T-cell (primary cell): ENCODE measurements at regions of chr16 and their contacts with region 1.

Region 1: DNA sequence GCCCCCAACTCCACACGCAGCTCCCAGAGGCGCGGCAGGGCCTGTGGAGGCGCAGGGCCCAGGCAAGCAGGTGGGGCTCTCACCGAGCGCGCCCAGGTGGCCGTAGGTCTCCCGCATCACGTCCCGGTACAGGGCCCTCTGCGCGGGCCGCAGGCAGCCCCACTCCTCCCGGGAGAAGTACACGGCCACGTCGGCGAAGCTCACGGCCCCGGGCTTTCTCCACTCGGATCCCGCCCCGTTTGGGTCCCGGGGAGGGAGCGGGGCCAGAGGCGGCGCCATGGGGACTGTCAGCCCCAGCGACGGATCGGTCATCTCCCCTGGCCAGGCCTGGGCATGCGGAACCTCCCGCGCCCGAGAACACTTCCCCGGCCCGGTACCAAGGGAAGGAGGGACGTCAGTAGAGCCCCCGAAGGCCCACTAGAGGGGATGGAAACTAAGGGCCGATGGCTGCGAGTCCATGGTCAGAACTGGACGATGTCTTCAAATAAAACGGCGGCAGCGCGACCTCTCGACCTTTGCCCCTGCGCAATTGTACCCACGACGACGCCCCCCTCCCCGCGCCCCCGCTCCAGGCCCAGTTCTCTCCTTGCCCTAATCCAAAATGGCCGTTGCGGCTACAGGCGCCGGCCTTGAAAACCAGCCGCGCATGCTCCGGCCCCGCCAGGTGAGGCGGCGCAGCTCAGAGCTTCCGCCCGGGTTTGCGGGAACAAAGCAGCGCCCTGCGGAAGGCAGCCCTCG is at the start of gene ZNF747:
- DNase-seq: peak; percentile 83 to 95 (median 90)
- ATAC-seq: peak; percentile 81 to 84 (median 82)
- H3K4me3 ChIP-seq: peak within 1 kb of the TSS; percentile 83 to 97
- H3K4me3 Mint-ChIP-seq: peak within 1 kb of the TSS; percentile 92 to 100 (median 97)
- H3K27ac ChIP-seq: peak within 1 kb of the TSS; percentile 97
- H3K27ac Mint-ChIP-seq: peak within 1 kb of the TSS; percentile 95 to 99
- H3K4me1 ChIP-seq: peaks cover 7 to 48% of the 10 kb centered on the region in 2 experiments
- H3K4me1 Mint-ChIP-seq: peaks cover 30 to 42% (median 35%) of the 10 kb centered on the region in 3 donors
- H3K27me3 ChIP-seq: no peaks in the 10 kb centered on the region
- H3K27me3 Mint-ChIP-seq: no peaks in the 10 kb centered on the region
- total RNA-seq, gene ZNF747: 6.8 to 17.4 (median 14.2) TPM

Region 2: DNA sequence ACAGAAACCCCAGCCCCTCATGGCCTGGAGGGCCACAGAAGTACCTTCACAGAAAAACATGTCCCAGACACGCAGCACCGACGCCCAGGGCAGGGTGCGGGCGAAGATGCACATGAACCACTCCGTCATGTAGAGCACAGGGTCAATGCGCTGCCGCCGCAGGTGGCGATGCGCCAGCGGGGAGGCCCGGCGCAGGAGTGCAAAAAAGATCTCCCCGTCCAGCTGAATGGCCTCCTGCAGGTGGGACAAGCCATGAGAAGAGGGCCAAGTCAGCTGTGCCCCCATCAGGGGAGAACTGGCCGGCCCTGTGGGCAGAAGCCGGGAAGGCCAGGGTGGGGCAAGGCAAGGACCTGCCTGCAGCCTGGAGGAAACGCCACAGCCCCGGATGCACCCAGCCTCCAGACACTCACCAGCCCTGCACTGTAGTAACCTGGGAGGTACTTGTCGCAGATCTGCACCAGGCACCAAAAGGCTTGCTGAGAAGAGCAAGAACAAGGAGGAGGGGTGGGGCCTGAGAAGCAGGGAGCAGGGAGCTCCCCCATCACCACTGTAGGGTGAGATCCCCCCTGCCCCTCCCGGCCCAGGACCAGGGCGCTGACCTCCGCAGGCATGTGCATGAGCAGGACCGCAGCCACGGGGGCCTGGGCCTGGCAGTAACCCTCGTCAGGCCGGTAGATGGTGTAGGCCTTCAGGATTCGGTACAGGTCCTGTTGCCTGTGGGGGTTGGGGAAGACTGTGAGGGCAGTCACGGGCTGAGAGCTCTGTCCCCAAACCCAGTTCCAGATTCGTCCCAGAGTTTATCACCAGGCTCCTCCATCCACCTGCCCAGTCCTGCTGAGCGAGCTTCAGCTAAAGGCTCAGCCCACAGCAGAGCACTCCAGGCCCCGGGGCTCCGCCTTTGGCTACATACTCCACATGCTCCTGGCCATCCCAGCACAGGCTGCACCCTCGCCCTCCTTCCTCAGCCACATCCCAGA is 175.1 kb before region 1 on chr16:
- CTCF ChIA-PET with region 1: no interaction called
- POLR2A ChIA-PET with region 1: no interaction called
- DNase-seq: no peak
- ATAC-seq: no peak
- H3K4me3 ChIP-seq: no peak overlapping the region
- H3K4me3 Mint-ChIP-seq: no peak overlapping the region
- H3K27ac ChIP-seq: no peak overlapping the region
- H3K27ac Mint-ChIP-seq: peak overlapping the region in 1 of 2 donors; percentile 6
- H3K4me1 ChIP-seq: peaks cover 2 to 20% of the 10 kb centered on the region in 2 experiments
- H3K4me1 Mint-ChIP-seq: peaks cover 17 to 23% (median 19%) of the 10 kb centered on the region in 3 donors
- H3K27me3 ChIP-seq: no peaks in the 10 kb centered on the region
- H3K27me3 Mint-ChIP-seq: no peaks in the 10 kb centered on the region

Region 3: DNA sequence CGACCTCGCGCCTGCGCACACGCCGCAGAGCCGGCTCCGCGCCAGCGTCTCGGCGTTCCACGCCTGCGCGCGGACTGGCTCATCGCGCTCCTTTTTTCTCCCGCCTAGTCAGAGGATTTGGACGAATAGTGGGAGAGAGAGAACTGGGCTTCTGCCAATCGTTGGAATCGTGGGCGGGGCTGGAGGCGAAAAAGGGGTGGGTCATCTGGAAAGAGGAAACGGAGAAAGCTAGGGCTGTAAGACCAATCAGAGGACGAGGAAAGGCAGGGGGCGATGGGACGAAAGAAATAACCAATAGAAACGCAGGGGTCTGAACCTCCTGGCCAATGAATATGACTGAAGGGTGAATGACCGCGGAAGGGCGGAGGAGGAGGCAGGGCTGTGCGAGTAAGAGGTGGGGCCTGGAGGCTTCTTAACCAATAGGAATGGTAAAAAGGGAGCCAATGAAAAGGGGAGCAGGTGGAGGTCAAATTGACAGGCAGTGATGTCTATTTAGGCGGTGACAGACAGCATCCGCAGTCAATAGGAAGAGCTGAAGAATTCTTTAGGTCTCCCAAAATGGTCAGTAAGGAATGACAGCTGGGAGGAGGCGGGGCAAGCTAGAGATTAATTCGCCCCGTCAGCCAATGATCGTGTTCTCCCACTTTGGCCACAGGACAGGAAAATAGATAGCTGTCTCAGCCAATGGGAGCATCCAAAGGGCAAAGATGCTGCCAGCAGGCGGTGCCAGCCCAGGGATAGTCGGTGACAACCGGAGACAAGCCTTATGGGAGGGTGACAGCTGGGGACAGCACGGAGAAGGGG is 163.9 kb before region 1 on chr16 and contains the start of gene TBC1D10B:
- CTCF ChIA-PET with region 1: no interaction called
- POLR2A ChIA-PET with region 1: no interaction called
- DNase-seq: peak; percentile 96 to 100 (median 99)
- ATAC-seq: peak; percentile 83 to 86 (median 84)
- H3K4me3 ChIP-seq: peak within 1 kb of the TSS; percentile 62 to 66
- H3K4me3 Mint-ChIP-seq: peak within 1 kb of the TSS; percentile 85 to 91 (median 86)
- H3K27ac ChIP-seq: peak within 1 kb of the TSS; percentile 73
- H3K27ac Mint-ChIP-seq: peak within 1 kb of the TSS; percentile 93 to 95
- H3K4me1 ChIP-seq: peaks cover 22 to 44% of the 10 kb centered on the region in 2 experiments
- H3K4me1 Mint-ChIP-seq: peaks cover 45 to 49% (median 46%) of the 10 kb centered on the region in 3 donors
- H3K27me3 ChIP-seq: no peaks in the 10 kb centered on the region
- H3K27me3 Mint-ChIP-seq: no peaks in the 10 kb centered on the region
- total RNA-seq, gene TBC1D10B: 24.0 to 60.1 (median 52.5) TPM

Region 4: GRCh38 chr16:30551781-30552180 is 17.2 kb after region 1 on chr16:
- CTCF ChIA-PET with region 1: interaction called, 7 to 46 read pairs
- POLR2A ChIA-PET with region 1: interaction called, 6 to 7 read pairs
- DNase-seq: peak in 34 of 35 experiments; percentile 28 to 85 (median 58)
- ATAC-seq: peak; percentile 85 to 92 (median 88)
- H3K4me3 ChIP-seq: peak overlapping the region in 1 of 2 donors; percentile 15
- H3K4me3 Mint-ChIP-seq: peak overlapping the region; percentile 52 to 76 (median 68)
- H3K27ac ChIP-seq: peak overlapping the region; percentile 80
- H3K27ac Mint-ChIP-seq: peak overlapping the region; percentile 94 to 97
- H3K4me1 ChIP-seq: peaks cover 21 to 62% of the 10 kb centered on the region in 2 experiments
- H3K4me1 Mint-ChIP-seq: peaks cover 59 to 67% (median 63%) of the 10 kb centered on the region in 3 donors
- H3K27me3 ChIP-seq: no peaks in the 10 kb centered on the region
- H3K27me3 Mint-ChIP-seq: no peaks in the 10 kb centered on the region

Region 5: GRCh38 chr16:30557957-30558788 is 23.6 kb after region 1 on chr16 and contains the start of gene ZNF764:
- CTCF ChIA-PET with region 1: interaction called, 7 to 46 read pairs
- POLR2A ChIA-PET with region 1: interaction called in 1 of 2 experiments, 4 read pairs
- DNase-seq: peak; percentile 88 to 97 (median 92)
- ATAC-seq: peak; percentile 90 to 94 (median 92)
- H3K4me3 ChIP-seq: peak within 1 kb of the TSS; percentile 52 to 73
- H3K4me3 Mint-ChIP-seq: peak within 1 kb of the TSS; percentile 84 to 89 (median 88)
- H3K27ac ChIP-seq: peak within 1 kb of the TSS; percentile 87
- H3K27ac Mint-ChIP-seq: peak within 1 kb of the TSS; percentile 93
- H3K4me1 ChIP-seq: peaks cover 5 to 67% of the 10 kb centered on the region in 2 experiments
- H3K4me1 Mint-ChIP-seq: peaks cover 37 to 51% (median 48%) of the 10 kb centered on the region in 3 donors
- H3K27me3 ChIP-seq: peaks cover 0 to 6% of the 10 kb centered on the region in 2 experiments
- H3K27me3 Mint-ChIP-seq: no peaks in the 10 kb centered on the region
- total RNA-seq, gene ZNF764: 14.9 to 33.9 (median 27.3) TPM

Region 6: GRCh38 chr16:30571695-30572600 is 37.4 kb after region 1 on chr16 and contains the start of gene ZNF688:
- CTCF ChIA-PET with region 1: interaction called in 1 of 2 experiments, 12 read pairs
- POLR2A ChIA-PET with region 1: interaction called in 1 of 2 experiments, 11 read pairs
- DNase-seq: peak; percentile 84 to 99 (median 96)
- ATAC-seq: peak; percentile 83 to 84 (median 83)
- H3K4me3 ChIP-seq: peak within 1 kb of the TSS; percentile 84 to 88
- H3K4me3 Mint-ChIP-seq: peak within 1 kb of the TSS; percentile 81 to 87 (median 84)
- H3K27ac ChIP-seq: peak within 1 kb of the TSS; percentile 96
- H3K27ac Mint-ChIP-seq: peak within 1 kb of the TSS; percentile 95
- H3K4me1 ChIP-seq: peaks cover 25 to 48% of the 10 kb centered on the region in 2 experiments
- H3K4me1 Mint-ChIP-seq: peaks cover 32 to 50% (median 40%) of the 10 kb centered on the region in 3 donors
- H3K27me3 ChIP-seq: no peaks in the 10 kb centered on the region
- H3K27me3 Mint-ChIP-seq: no peaks in the 10 kb centered on the region
- total RNA-seq, gene ZNF688: 11.9 to 25.9 (median 20.7) TPM

Region 7: GRCh38 chr16:30874821-30875717 is 340.5 kb after region 1 on chr16:
- CTCF ChIA-PET with region 1: no interaction called
- POLR2A ChIA-PET with region 1: no interaction called
- DNase-seq: peak; percentile 70 to 92 (median 82)
- ATAC-seq: peak; percentile 87 to 93 (median 92)
- H3K4me3 ChIP-seq: peak overlapping the region; percentile 71 to 85
- H3K4me3 Mint-ChIP-seq: peak overlapping the region; percentile 91 to 97 (median 93)
- H3K27ac ChIP-seq: peak overlapping the region; percentile 89
- H3K27ac Mint-ChIP-seq: peak overlapping the region; percentile 86 to 98
- H3K4me1 ChIP-seq: peaks cover 16 to 46% of the 10 kb centered on the region in 2 experiments
- H3K4me1 Mint-ChIP-seq: peaks cover 30 to 43% (median 33%) of the 10 kb centered on the region in 3 donors
- H3K27me3 ChIP-seq: no peaks in the 10 kb centered on the region
- H3K27me3 Mint-ChIP-seq: no peaks in the 10 kb centered on the region